ENCODE measurements at regions of chr6 and their contacts with region 1.

Region 1: GRCh38 chr6:161101517-161101916 is 109.9 kb downstream of the MAP3K4 start:
- DNase-seq: no peak
- ATAC-seq: no peak
- H3K4me3 ChIP-seq: no peak overlapping the region
- H3K4me3 Mint-ChIP-seq: no peak overlapping the region
- H3K27ac ChIP-seq: no peak overlapping the region
- H3K27ac Mint-ChIP-seq: no peak overlapping the region
- H3K4me1 ChIP-seq: no peaks in the 10 kb centered on the region
- H3K4me1 Mint-ChIP-seq: peaks cover 0 to 3% (median 0%) of the 10 kb centered on the region in 7 donors
- H3K27me3 ChIP-seq: no peaks in the 10 kb centered on the region
- H3K27me3 Mint-ChIP-seq: no peaks in the 10 kb centered on the region

Region 2: GRCh38 chr6:160930547-160931377 is 170.8 kb before region 1 on chr6:
- CTCF ChIA-PET with region 1: no interaction called
- POLR2A ChIA-PET with region 1: no interaction called
- intact Hi-C with region 1: loop called in 1 of 2 experiments (anchors 10 kb)
- DNase-seq: peak in 8 of 9 donors; percentile 3 to 69 (median 40)
- ATAC-seq: peak; percentile 72
- H3K4me3 ChIP-seq: no peak overlapping the region
- H3K4me3 Mint-ChIP-seq: peak overlapping the region in 7 of 10 donors; percentile 16 to 62 (median 30)
- H3K27ac ChIP-seq: no peak overlapping the region
- H3K27ac Mint-ChIP-seq: no peak overlapping the region
- H3K4me1 ChIP-seq: no peaks in the 10 kb centered on the region
- H3K4me1 Mint-ChIP-seq: peaks cover 0 to 5% (median 0%) of the 10 kb centered on the region in 7 donors
- H3K27me3 ChIP-seq: peaks cover 0 to 5% of the 10 kb centered on the region in 2 donors
- H3K27me3 Mint-ChIP-seq: peaks cover 32 to 50% (median 47%) of the 10 kb centered on the region in 5 donors

Region 3: DNA sequence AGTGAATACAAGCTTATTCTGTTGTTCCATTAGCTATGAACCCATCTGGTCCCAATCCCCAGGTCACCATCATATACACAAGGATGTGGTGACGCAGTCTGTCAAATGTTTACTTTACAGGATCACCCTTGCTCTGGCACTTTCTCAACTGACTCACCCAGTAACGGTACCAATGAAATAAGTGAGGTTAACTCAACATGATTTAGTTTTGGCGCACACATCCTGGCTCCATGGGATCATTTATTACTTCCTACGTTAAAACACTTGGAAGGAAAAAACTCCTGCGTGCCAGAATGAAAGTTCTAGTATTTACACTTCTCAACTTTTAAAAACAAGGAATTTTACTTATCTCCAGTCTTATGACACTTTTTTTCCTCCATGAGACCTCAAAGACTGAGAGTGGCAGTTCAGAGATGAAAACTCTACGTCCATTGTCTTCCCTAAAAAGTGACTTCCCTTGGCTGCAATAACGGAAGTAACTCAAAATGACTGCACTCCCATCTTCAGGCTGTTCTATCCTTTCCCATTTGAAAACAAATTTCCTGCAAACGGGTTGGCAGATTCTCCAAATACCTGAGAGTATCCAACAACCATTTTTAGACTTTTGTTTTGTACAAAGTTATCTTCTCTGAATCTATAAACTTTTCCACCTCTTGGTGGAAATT is 156.4 kb after region 1 on chr6:
- CTCF ChIA-PET with region 1: no interaction called
- POLR2A ChIA-PET with region 1: no interaction called
- intact Hi-C with region 1: no loop called
- DNase-seq: no peak
- ATAC-seq: no peak
- H3K4me3 ChIP-seq: no peak overlapping the region
- H3K4me3 Mint-ChIP-seq: no peak overlapping the region
- H3K27ac ChIP-seq: no peak overlapping the region
- H3K27ac Mint-ChIP-seq: no peak overlapping the region
- H3K4me1 ChIP-seq: no peaks in the 10 kb centered on the region
- H3K4me1 Mint-ChIP-seq: peaks cover 0 to 8% (median 0%) of the 10 kb centered on the region in 7 donors
- H3K27me3 ChIP-seq: no peaks in the 10 kb centered on the region
- H3K27me3 Mint-ChIP-seq: no peaks in the 10 kb centered on the region

Measured in naive thymus-derived CD4-positive, alpha-beta T cell (primary cell).